ENCODE measurements at regions of chr19 and their contacts with region 1.

Region 1: GRCh38 chr19:8580710-8581281 is 3.6 kb upstream of the MYO1F start:
- DNase-seq: peak; percentile 79 to 86 (median 83)
- H3K4me3 ChIP-seq: no peak overlapping the region
- H3K4me3 Mint-ChIP-seq: peak overlapping the region in 1 of 8 donors; percentile 21
- H3K27ac ChIP-seq: no peak overlapping the region
- H3K27ac Mint-ChIP-seq: peak overlapping the region in 2 of 7 donors; percentile 61 to 70
- H3K4me1 ChIP-seq: peaks cover 35% of the 10 kb centered on the region
- H3K4me1 Mint-ChIP-seq: peaks cover 17 to 45% (median 29%) of the 10 kb centered on the region in 4 donors
- H3K27me3 ChIP-seq: no peaks in the 10 kb centered on the region
- H3K27me3 Mint-ChIP-seq: no peaks in the 10 kb centered on the region

Region 2: DNA sequence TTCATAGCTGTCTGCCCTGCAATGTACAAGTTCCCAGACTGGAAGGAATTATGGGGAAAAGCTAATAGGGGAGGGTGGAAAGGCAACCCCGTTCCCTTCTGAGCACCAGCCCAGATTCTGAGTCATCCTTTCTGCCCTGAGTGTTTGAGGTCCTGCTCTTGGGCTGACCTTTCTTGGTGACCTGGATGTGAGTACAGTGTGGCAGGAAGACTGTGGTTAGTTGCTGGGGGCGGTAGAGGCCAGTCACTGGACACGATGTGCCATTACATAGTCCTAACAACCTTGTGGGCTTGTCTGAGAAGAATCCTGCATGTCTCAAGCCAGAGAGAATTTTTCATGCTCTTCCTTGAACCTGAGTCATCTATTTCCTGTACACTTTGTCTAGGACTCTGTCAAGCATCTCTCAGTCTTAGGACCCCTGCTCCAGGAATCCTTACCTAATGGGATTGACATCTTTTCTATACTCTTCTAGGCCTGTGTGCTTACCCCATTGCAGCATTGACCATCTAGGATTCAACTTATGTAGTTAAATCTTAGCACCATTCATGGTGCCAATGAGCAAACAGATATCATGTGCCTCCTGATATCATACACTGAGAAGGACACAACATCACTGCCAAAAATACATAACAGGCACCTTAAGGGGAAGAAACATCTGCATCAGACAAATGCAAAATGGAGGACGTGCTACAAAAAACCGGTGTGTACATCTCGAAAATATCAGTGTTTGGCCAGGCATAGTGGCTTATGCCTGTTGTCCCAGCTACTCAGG is 225.0 kb before region 1 on chr19:
- CTCF ChIA-PET with region 1: interaction called, 42 read pairs
- POLR2A ChIA-PET with region 1: interaction called, 3 read pairs
- intact Hi-C with region 1: loop called (anchors 2 kb)
- DNase-seq: no peak
- H3K4me3 ChIP-seq: no peak overlapping the region
- H3K4me3 Mint-ChIP-seq: peak overlapping the region in 1 of 8 donors; percentile 1
- H3K27ac ChIP-seq: no peak overlapping the region
- H3K27ac Mint-ChIP-seq: no peak overlapping the region
- H3K4me1 ChIP-seq: no peaks in the 10 kb centered on the region
- H3K4me1 Mint-ChIP-seq: peaks cover 0 to 5% (median 2%) of the 10 kb centered on the region in 4 donors
- H3K27me3 ChIP-seq: no peaks in the 10 kb centered on the region
- H3K27me3 Mint-ChIP-seq: peaks cover 6 to 11% of the 10 kb centered on the region in 2 donors

Region 3: GRCh38 chr19:8451885-8452284 is 128.9 kb before region 1 on chr19:
- CTCF ChIA-PET with region 1: interaction called, 18 read pairs
- POLR2A ChIA-PET with region 1: interaction called, 6 read pairs
- intact Hi-C with region 1: no loop called
- DNase-seq: peak in 2 of 5 donors; percentile 29 to 59
- H3K4me3 ChIP-seq: no peak overlapping the region
- H3K4me3 Mint-ChIP-seq: peak overlapping the region; percentile 21 to 78 (median 61)
- H3K27ac ChIP-seq: no peak overlapping the region
- H3K27ac Mint-ChIP-seq: peak overlapping the region in 2 of 7 donors; percentile 35 to 78
- H3K4me1 ChIP-seq: peaks cover 87% of the 10 kb centered on the region
- H3K4me1 Mint-ChIP-seq: peaks cover 61 to 93% (median 80%) of the 10 kb centered on the region in 4 donors
- H3K27me3 ChIP-seq: no peaks in the 10 kb centered on the region
- H3K27me3 Mint-ChIP-seq: no peaks in the 10 kb centered on the region

Region 4: DNA sequence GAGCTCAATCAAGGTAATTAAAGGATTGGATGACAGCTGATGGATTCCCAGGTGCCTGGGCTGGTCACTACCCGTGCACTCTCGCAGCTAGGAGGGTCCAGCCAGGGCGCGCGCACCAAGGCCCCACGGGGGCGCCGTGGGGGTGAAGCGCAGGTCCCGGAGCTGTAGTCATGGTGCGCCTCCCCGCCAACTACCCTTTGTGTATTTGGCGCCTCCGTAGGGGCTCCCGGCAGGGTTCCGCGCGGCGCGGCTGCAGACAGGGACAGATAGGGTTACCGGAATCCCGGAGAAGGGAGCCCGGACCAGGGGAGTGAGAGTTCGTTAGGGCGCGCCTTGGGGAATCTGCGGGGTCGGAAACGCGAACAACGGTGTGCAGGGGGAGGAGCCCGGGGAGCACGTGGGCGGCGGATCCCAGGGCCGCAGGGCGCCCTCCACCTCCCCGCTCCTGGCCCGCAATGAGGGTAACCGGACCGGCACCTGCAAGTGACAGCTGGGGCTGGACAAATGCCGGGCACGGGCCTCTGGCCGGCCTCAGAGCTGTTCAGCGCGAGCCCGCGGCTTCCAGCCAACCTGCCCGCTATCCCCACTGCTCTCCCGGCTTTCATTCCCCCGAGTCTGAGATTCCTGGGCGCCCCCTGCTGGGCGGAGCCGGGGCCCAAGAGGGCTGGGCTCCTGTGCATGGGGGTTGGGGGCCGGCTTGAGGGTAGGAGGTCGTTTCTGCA is 75.0 kb before region 1 on chr19:
- CTCF ChIA-PET with region 1: interaction called, 80 read pairs
- POLR2A ChIA-PET with region 1: interaction called, 17 read pairs
- intact Hi-C with region 1: no loop called
- DNase-seq: peak; percentile 44 to 71 (median 60)
- H3K4me3 ChIP-seq: peak overlapping the region; percentile 52 to 57
- H3K4me3 Mint-ChIP-seq: peak overlapping the region; percentile 88 to 95 (median 91)
- H3K27ac ChIP-seq: peak overlapping the region; percentile 22
- H3K27ac Mint-ChIP-seq: peak overlapping the region; percentile 74 to 94 (median 87)
- H3K4me1 ChIP-seq: peaks cover 13% of the 10 kb centered on the region
- H3K4me1 Mint-ChIP-seq: peaks cover 4 to 33% (median 9%) of the 10 kb centered on the region in 4 donors
- H3K27me3 ChIP-seq: no peaks in the 10 kb centered on the region
- H3K27me3 Mint-ChIP-seq: no peaks in the 10 kb centered on the region

Region 5: GRCh38 chr19:8544168-8544567 is 36.6 kb before region 1 on chr19:
- CTCF ChIA-PET with region 1: interaction called, 111 read pairs
- POLR2A ChIA-PET with region 1: interaction called, 20 read pairs
- intact Hi-C with region 1: no loop called
- DNase-seq: no peak
- H3K4me3 ChIP-seq: no peak overlapping the region
- H3K4me3 Mint-ChIP-seq: no peak overlapping the region
- H3K27ac ChIP-seq: no peak overlapping the region
- H3K27ac Mint-ChIP-seq: no peak overlapping the region
- H3K4me1 ChIP-seq: no peaks in the 10 kb centered on the region
- H3K4me1 Mint-ChIP-seq: no peaks in the 10 kb centered on the region
- H3K27me3 ChIP-seq: no peaks in the 10 kb centered on the region
- H3K27me3 Mint-ChIP-seq: no peaks in the 10 kb centered on the region

Region 6: GRCh38 chr19:8592231-8593009 is 11.6 kb after region 1 on chr19:
- CTCF ChIA-PET with region 1: interaction called, 36 read pairs
- POLR2A ChIA-PET with region 1: interaction called, 6 read pairs
- intact Hi-C with region 1: no loop called
- DNase-seq: peak; percentile 96 to 97 (median 96)
- H3K4me3 ChIP-seq: peak overlapping the region; percentile 18 to 73
- H3K4me3 Mint-ChIP-seq: peak overlapping the region; percentile 82 to 90 (median 88)
- H3K27ac ChIP-seq: no peak overlapping the region
- H3K27ac Mint-ChIP-seq: peak overlapping the region; percentile 75 to 95 (median 90)
- H3K4me1 ChIP-seq: peaks cover 19% of the 10 kb centered on the region
- H3K4me1 Mint-ChIP-seq: peaks cover 16 to 30% (median 22%) of the 10 kb centered on the region in 4 donors
- H3K27me3 ChIP-seq: no peaks in the 10 kb centered on the region
- H3K27me3 Mint-ChIP-seq: no peaks in the 10 kb centered on the region